PC-9 (cell line): ENCODE measurements at regions of chrX and their contacts with region 1.

Region 1: DNA sequence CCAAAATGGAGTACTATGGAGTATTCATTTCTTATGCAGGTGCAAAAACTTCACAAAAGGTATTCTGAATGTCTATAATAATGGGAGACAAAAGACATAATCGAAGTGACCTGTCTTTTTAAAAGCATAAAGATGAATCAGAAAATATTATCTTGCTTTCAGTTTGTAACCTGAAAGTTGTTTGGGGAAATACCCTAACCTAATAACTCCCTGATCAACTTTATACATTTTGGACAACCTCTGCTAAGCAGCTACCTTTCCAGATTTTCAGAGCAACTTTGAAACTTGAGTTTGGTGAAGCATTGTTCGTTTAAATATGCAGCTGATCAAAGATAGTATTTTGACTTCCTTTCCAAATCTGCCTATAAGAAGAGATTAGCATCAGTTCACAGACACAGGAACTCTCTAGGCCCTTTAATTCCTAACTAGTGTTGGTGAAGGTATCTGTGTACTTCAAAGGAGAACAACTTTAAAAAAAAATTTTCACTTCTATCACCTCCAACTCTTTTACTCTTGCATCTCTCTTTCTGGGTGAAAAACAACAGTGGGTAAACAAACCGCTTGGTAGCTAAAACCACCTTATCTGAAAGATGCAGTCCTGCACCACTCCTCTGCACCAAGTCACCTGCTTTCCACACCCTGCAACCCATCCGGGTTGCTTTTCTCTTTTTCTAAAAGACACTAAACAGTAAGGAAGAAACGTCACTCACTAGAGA is 26.5 kb downstream of the CD40LG start:
- DNase-seq: no peak
- H3K4me3 ChIP-seq: no peak overlapping the region
- H3K27ac ChIP-seq: no peak overlapping the region
- H3K4me1 ChIP-seq: no peaks in the 10 kb centered on the region
- H3K27me3 ChIP-seq: no peaks in the 10 kb centered on the region
- CTCF ChIP-seq: no peak

Region 2: DNA sequence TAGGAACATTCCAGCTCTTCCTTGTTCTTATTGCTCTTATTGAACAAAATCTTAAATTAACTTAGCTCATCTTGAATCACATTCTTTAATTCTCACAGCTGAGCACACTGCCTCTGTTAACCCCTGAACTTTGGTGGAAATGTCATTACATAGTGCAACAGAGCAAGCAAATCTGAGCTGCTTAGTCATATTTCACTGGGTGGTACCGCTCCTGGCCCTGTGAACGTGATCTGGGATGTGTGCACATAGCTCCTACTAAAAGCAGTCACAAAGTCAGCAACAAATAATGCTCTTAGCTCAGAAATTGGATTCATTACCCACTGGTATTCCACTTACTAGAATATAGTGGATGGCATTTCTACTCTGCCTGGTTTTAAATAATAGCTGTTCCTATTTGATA is 78.4 kb after region 1 on chrX:
- CTCF ChIA-PET with region 1: no interaction called
- POLR2A ChIA-PET with region 1: interaction called, 11 read pairs
- intact Hi-C with region 1: no loop called
- DNase-seq: peak in 1 of 2 experiments; percentile 45
- H3K4me3 ChIP-seq: no peak overlapping the region
- H3K27ac ChIP-seq: no peak overlapping the region
- H3K4me1 ChIP-seq: no peaks in the 10 kb centered on the region
- H3K27me3 ChIP-seq: no peaks in the 10 kb centered on the region
- CTCF ChIP-seq: no peak

Region 3: GRCh38 chrX:136768469-136769084 is 94.1 kb after region 1 on chrX:
- CTCF ChIA-PET with region 1: no interaction called
- POLR2A ChIA-PET with region 1: no interaction called
- intact Hi-C with region 1: no loop called
- DNase-seq: peak in 1 of 2 experiments; percentile 76
- H3K4me3 ChIP-seq: no peak overlapping the region
- H3K27ac ChIP-seq: no peak overlapping the region
- H3K4me1 ChIP-seq: peaks cover 12% of the 10 kb centered on the region
- H3K27me3 ChIP-seq: no peaks in the 10 kb centered on the region
- CTCF ChIP-seq: no peak

Region 4: GRCh38 chrX:136866337-136867095 is 192.1 kb after region 1 on chrX:
- CTCF ChIA-PET with region 1: no interaction called
- POLR2A ChIA-PET with region 1: no interaction called
- intact Hi-C with region 1: no loop called
- DNase-seq: no peak
- H3K4me3 ChIP-seq: no peak overlapping the region
- H3K27ac ChIP-seq: no peak overlapping the region
- H3K4me1 ChIP-seq: no peaks in the 10 kb centered on the region
- H3K27me3 ChIP-seq: no peaks in the 10 kb centered on the region
- CTCF ChIP-seq: no peak